CD8-positive, alpha-beta T cell (primary cell): ENCODE measurements at regions of chr5 and their contacts with region 1.

Region 1: DNA sequence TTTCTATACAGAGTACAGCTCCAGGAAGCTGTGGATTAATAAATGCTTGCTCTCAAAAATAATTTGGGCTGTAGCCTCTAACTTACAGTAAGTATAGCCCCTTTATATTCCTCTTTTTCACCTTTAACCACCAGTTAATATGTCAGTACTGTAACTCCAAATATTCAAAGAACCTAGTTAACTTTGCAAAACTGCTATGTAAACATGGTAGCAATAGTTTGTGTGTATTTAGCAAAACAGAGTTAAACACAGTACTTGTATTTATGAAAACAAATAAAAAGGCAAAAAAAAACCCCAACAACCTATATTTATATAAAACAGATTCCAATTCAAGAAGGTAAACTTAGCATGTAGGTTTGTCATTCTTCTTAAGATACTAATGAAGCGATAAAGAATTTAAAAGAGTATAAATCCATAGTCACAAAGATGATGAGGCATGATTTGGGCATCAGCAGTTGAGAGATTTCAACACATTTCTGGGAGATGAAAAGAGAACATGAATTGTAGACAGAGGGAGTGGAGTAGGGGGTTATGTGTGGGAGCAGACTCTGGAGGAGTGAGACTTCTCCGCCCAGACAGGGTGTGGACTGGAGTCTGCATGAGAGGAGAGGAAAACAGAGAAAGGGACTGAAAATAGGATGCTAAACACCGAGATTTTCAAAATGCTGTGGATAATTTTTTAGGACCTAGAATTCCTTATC is 47.0 kb upstream of the F2RL1 start:
- DNase-seq: no peak
- ATAC-seq: no peak
- H3K4me3 ChIP-seq: no peak overlapping the region
- H3K4me3 Mint-ChIP-seq: no peak overlapping the region
- H3K27ac ChIP-seq: no peak overlapping the region
- H3K27ac Mint-ChIP-seq: no peak overlapping the region
- H3K4me1 ChIP-seq: no peaks in the 10 kb centered on the region
- H3K4me1 Mint-ChIP-seq: peaks cover 3% of the 10 kb centered on the region
- H3K27me3 ChIP-seq: no peaks in the 10 kb centered on the region
- H3K27me3 Mint-ChIP-seq: no peaks in the 10 kb centered on the region
- CTCF ChIP-seq: no peak

Region 2: DNA sequence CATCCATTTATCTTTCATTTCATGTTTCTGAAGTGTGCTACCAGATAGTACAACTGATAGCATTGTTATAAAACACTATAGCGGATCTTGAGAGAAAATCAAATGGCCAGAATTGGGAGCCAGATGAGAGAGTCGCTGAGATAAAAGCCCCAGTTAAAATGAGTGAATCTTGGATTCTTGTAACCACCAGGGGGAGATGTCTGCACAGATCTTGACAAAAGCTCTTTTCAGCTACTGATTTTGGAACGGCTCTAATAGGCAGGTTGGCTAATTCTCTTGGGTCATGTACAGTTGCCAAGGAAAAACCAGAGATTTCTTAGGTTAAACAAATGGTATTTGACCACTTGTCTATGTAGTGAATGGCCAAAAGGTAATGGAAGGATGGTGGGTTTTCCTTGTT is 170.4 kb before region 1 on chr5:
- CTCF ChIA-PET with region 1: interaction called, 67 read pairs
- POLR2A ChIA-PET with region 1: interaction called, 5 read pairs
- intact Hi-C with region 1: loop called (anchors 1 kb)
- DNase-seq: peak in 4 of 9 experiments; percentile 14 to 74 (median 42)
- ATAC-seq: peak; percentile 69
- H3K4me3 ChIP-seq: no peak overlapping the region
- H3K4me3 Mint-ChIP-seq: no peak overlapping the region
- H3K27ac ChIP-seq: no peak overlapping the region
- H3K27ac Mint-ChIP-seq: no peak overlapping the region
- H3K4me1 ChIP-seq: no peaks in the 10 kb centered on the region
- H3K4me1 Mint-ChIP-seq: no peaks in the 10 kb centered on the region
- H3K27me3 ChIP-seq: no peaks in the 10 kb centered on the region
- H3K27me3 Mint-ChIP-seq: no peaks in the 10 kb centered on the region
- CTCF ChIP-seq: peak; percentile 69

Region 3: DNA sequence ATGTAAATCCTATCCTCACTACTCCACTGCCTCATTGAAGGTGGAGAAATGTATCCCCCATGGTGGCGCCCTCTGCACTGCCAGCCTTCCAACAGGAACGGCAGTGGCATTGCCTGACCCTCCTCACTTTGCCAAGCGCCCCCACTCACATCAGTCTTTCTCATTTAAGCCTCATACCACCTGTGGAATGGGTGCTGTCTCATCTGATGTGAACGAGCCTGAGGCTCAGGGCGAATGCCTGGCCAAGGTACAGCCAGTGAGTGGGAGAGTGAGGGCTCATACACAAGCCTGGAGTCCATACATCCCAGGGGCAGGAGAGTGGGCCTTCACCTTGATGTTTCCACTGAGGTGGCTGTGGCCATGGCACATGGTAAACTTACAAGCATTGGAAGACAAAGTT is 158.9 kb before region 1 on chr5:
- CTCF ChIA-PET with region 1: interaction called, 10 read pairs
- POLR2A ChIA-PET with region 1: no interaction called
- intact Hi-C with region 1: no loop called
- DNase-seq: no peak
- ATAC-seq: no peak
- H3K4me3 ChIP-seq: no peak overlapping the region
- H3K4me3 Mint-ChIP-seq: no peak overlapping the region
- H3K27ac ChIP-seq: no peak overlapping the region
- H3K27ac Mint-ChIP-seq: no peak overlapping the region
- H3K4me1 ChIP-seq: no peaks in the 10 kb centered on the region
- H3K4me1 Mint-ChIP-seq: peaks cover 1% of the 10 kb centered on the region
- H3K27me3 ChIP-seq: no peaks in the 10 kb centered on the region
- H3K27me3 Mint-ChIP-seq: no peaks in the 10 kb centered on the region
- CTCF ChIP-seq: no peak

Region 4: DNA sequence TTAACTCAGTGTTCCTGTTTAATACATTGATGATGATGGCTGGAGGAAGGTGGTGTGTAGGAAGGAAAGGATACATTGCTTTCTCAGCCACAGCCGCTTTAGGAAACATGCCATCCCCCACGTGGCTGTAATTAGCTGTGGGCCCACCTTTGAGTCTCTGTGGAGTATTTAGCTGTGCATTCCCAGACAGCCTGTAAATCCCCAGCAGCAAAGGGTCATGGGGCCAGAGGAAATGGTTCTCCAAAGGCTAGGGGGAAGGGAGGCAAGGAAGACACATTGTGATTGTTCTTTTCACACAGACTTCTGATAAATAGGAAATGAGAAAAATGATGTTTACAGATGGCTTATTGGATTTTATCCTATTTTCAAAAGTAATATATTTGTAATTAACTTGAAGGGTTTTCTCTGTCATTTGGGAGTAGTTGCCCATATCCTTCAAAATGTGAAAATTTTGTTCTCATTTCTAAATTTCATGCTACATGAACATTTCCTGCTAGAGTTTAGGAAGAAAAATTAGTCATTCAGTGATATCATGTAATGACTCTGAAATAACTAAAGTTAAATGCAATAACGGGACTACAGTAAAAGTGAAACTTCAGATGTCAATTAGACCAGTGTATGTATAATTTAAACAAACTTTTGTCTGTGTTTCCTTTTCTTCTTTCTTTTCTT is 80.3 kb before region 1 on chr5:
- CTCF ChIA-PET with region 1: interaction called, 14 read pairs
- POLR2A ChIA-PET with region 1: interaction called, 4 read pairs
- intact Hi-C with region 1: no loop called
- DNase-seq: no peak
- ATAC-seq: no peak
- H3K4me3 ChIP-seq: no peak overlapping the region
- H3K4me3 Mint-ChIP-seq: no peak overlapping the region
- H3K27ac ChIP-seq: no peak overlapping the region
- H3K27ac Mint-ChIP-seq: peak overlapping the region; percentile 39
- H3K4me1 ChIP-seq: no peaks in the 10 kb centered on the region
- H3K4me1 Mint-ChIP-seq: no peaks in the 10 kb centered on the region
- H3K27me3 ChIP-seq: no peaks in the 10 kb centered on the region
- H3K27me3 Mint-ChIP-seq: no peaks in the 10 kb centered on the region
- CTCF ChIP-seq: no peak

Region 5: GRCh38 chr5:76715736-76716455 is 56.0 kb before region 1 on chr5 and contains the start of gene F2R:
- CTCF ChIA-PET with region 1: interaction called, 45 read pairs
- POLR2A ChIA-PET with region 1: interaction called, 6 read pairs
- intact Hi-C with region 1: loop called (anchors 1 kb)
- DNase-seq: peak in 7 of 9 experiments; percentile 45 to 83 (median 66)
- ATAC-seq: peak; percentile 80
- H3K4me3 ChIP-seq: peak within 1 kb of the TSS; percentile 80 to 91
- H3K4me3 Mint-ChIP-seq: peak within 1 kb of the TSS; percentile 85
- H3K27ac ChIP-seq: peak within 1 kb of the TSS; percentile 44 to 50
- H3K27ac Mint-ChIP-seq: peak within 1 kb of the TSS; percentile 76
- H3K4me1 ChIP-seq: peaks cover 18% of the 10 kb centered on the region
- H3K4me1 Mint-ChIP-seq: peaks cover 28% of the 10 kb centered on the region
- H3K27me3 ChIP-seq: peaks cover 0 to 9% of the 10 kb centered on the region in 2 experiments
- H3K27me3 Mint-ChIP-seq: peaks cover 31% of the 10 kb centered on the region
- CTCF ChIP-seq: peak; percentile 55
- total RNA-seq, gene F2R: 10.7 to 12.7 TPM

Region 6: DNA sequence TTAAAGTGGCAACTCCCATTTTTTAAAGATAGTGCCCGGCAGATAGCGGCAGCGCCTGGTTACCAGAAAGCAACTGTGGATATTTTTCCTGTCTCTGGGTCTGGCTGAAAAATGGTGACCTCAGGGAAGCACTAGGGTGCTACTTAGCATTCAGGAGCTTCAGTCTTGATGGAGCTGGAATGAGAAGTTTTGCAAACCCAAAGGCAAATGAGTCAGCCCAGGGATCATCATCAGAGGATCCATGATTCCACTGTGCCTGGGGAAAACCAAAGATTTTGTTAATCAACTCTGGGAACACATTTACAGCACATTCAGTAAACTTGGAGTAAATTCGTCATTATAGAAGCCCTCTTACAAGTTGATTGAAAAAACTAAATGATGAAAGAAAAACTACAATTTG is 29.3 kb before region 1 on chr5:
- CTCF ChIA-PET with region 1: interaction called, 25 read pairs
- POLR2A ChIA-PET with region 1: interaction called, 10 read pairs
- intact Hi-C with region 1: loop called (anchors 1 to 5 kb)
- DNase-seq: no peak
- ATAC-seq: no peak
- H3K4me3 ChIP-seq: no peak overlapping the region
- H3K4me3 Mint-ChIP-seq: no peak overlapping the region
- H3K27ac ChIP-seq: peak overlapping the region in 1 of 2 experiments; percentile 50
- H3K27ac Mint-ChIP-seq: no peak overlapping the region
- H3K4me1 ChIP-seq: peaks cover 21% of the 10 kb centered on the region
- H3K4me1 Mint-ChIP-seq: peaks cover 26% of the 10 kb centered on the region
- H3K27me3 ChIP-seq: no peaks in the 10 kb centered on the region
- H3K27me3 Mint-ChIP-seq: no peaks in the 10 kb centered on the region
- CTCF ChIP-seq: no peak

Region 7: DNA sequence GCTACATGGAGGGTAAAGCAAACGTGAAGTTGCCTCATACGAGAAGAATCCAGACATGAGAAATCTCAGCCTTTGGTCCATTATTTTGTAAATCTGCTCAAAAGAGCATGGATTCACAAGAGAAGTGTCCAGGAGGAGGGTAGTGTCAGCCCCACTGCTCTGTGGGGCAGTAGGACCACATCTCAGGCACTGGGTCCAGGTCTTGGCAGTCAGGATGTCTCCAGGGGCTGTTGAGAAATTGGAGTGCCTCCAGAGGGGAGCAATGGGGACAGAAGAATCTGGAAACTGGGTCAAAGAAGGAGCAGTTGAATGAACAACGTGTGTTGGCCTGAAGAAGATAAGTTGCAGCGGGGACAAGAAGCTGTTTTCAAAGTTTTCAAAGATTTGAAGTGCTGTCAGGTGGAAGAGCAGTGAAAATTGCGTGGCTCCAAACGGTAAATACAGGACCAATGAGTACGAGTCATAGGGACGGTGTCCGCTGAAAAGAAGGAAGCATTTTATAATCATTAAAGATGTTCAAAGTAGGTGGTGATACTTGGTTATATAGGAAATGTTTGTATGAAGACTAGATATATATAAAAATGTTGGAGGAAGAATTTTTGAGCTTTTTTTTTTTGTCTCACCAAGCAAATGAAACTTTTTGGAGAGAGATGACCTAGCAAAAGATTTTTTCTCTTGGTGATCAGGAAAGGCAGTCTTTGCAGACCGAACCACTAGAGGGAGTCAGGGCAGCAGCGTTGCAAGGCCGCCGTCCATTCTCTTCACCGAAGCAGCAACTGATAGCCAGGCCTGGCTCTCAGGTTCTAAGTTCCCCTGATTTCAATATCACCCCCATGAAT is 372.4 kb after region 1 on chr5:
- CTCF ChIA-PET with region 1: no interaction called
- POLR2A ChIA-PET with region 1: no interaction called
- intact Hi-C with region 1: no loop called
- DNase-seq: peak in 8 of 9 experiments; percentile 27 to 76 (median 62)
- ATAC-seq: peak; percentile 77
- H3K4me3 ChIP-seq: no peak overlapping the region
- H3K4me3 Mint-ChIP-seq: no peak overlapping the region
- H3K27ac ChIP-seq: no peak overlapping the region
- H3K27ac Mint-ChIP-seq: no peak overlapping the region
- H3K4me1 ChIP-seq: no peaks in the 10 kb centered on the region
- H3K4me1 Mint-ChIP-seq: peaks cover 2% of the 10 kb centered on the region
- H3K27me3 ChIP-seq: no peaks in the 10 kb centered on the region
- H3K27me3 Mint-ChIP-seq: no peaks in the 10 kb centered on the region
- CTCF ChIP-seq: peak; percentile 73